Activated CD8-positive, alpha-beta T cell treated with anti-CD3 and anti-CD28 coated beads, Interleukin-2, amount 10 ng/mL, durations not matched to agents 7 days and 5 days (primary cell): ENCODE measurements at regions of chr19 and their contacts with region 1.

Region 1: GRCh38 chr19:16778796-16779411 is 50.3 kb upstream of the SIN3B start:
- DNase-seq: peak; percentile 70
- ATAC-seq: peak; percentile 64
- H3K4me3 Mint-ChIP-seq: no peak overlapping the region
- H3K27ac Mint-ChIP-seq: no peak overlapping the region
- H3K4me1 Mint-ChIP-seq: no peaks in the 10 kb centered on the region
- H3K27me3 Mint-ChIP-seq: peaks cover 13% of the 10 kb centered on the region

Region 2: GRCh38 chr19:16795721-16796120 is 16.8 kb after region 1 on chr19:
- CTCF ChIA-PET with region 1: no interaction called
- POLR2A ChIA-PET with region 1: no interaction called
- DNase-seq: no peak
- ATAC-seq: no peak
- H3K4me3 Mint-ChIP-seq: no peak overlapping the region
- H3K27ac Mint-ChIP-seq: no peak overlapping the region
- H3K4me1 Mint-ChIP-seq: no peaks in the 10 kb centered on the region
- H3K27me3 Mint-ChIP-seq: no peaks in the 10 kb centered on the region

Region 3: DNA sequence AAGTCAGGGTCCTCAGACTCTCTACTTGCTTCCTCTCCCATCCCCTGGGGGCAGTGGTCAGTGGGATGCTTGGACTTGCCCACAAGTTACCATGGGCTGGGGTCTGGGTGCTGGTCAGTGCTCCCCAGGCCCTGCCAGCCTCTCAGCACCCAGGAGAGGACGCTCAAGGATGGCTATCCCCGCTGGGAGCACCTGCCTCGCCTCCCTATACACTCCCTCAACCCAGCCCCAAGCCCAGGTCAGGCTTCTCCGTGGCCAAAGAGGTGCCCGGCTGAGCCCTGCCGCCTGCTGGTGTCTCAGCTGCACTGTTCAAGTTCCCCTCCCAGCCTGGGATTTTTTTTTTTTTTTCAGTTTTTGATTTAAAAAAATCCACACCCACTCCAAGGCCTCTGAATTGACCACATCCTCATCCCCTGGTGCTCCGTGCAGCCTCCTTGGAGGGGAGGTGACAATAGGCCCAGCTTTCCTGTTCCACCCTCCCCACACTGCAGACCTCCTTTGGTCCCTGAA is 120.7 kb after region 1 on chr19:
- CTCF ChIA-PET with region 1: interaction called, 11 read pairs
- POLR2A ChIA-PET with region 1: no interaction called
- DNase-seq: peak; percentile 63
- ATAC-seq: peak; percentile 28
- H3K4me3 Mint-ChIP-seq: peak overlapping the region; percentile 36
- H3K27ac Mint-ChIP-seq: peak overlapping the region; percentile 55
- H3K4me1 Mint-ChIP-seq: peaks cover 29% of the 10 kb centered on the region
- H3K27me3 Mint-ChIP-seq: peaks cover 19% of the 10 kb centered on the region